ENCODE measurements at regions of chr1 and their contacts with region 1.

Region 1: GRCh38 chr1:182707122-182707521 is 22.7 kb upstream of the RGS8 start:
- DNase-seq: no peak
- H3K4me3 Mint-ChIP-seq: no peak overlapping the region
- H3K27ac Mint-ChIP-seq: no peak overlapping the region
- H3K4me1 Mint-ChIP-seq: peaks cover 28% of the 10 kb centered on the region
- H3K27me3 Mint-ChIP-seq: peaks cover 2% of the 10 kb centered on the region

Region 2: DNA sequence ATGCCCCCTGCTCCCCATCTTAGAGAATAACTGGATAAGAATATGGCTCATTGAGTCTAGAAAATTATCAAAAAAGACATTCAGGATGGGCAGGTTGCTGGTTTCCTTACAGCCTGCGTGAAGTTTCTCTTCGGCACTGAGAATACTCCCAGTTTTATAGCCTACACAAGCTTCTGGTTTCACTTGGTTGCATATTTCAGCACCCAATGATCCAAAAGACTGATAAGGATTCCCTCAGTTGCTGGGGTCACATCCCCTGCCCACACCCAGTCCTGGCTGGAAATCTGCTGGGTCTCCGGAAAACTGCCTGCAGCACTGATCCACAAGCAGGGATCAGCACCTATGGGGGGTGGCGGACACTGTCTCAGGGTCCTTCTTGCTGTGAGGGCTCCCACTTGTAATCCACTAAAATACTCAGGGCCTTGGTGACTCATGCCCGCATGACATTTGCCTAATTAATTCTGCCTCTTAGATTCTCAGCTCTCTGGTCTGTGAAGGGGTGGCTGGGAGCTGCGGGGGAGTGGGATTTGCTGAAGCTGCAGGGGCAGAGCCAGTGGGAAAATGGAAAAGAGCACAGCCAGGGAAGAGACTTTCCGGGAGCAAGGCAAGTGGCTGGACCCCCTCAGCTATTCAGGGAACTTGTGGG is 788.1 kb before region 1 on chr1:
- intact Hi-C with region 1: no loop called
- DNase-seq: no peak
- H3K4me3 Mint-ChIP-seq: no peak overlapping the region
- H3K27ac Mint-ChIP-seq: no peak overlapping the region
- H3K4me1 Mint-ChIP-seq: no peaks in the 10 kb centered on the region
- H3K27me3 Mint-ChIP-seq: no peaks in the 10 kb centered on the region

Region 3: DNA sequence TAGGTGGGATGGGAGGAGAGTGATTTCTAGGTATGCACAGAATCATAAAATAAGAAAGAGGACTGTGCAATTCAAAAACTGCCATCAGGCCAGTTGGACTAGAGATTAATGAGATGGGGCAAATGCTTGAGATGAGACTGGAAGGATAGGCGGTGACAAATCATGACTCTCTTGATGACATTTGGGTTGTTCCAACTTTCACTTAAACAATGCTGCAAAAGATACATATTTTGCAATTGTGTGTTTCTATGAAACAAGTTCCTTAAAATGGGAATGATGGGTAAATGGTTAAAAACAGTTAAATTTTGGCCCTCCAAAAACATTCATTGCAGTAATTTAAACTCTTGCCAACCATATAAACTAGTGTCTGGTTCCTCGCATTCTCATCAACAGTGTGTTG is 173.2 kb before region 1 on chr1:
- intact Hi-C with region 1: no loop called
- DNase-seq: no peak
- H3K4me3 Mint-ChIP-seq: no peak overlapping the region
- H3K27ac Mint-ChIP-seq: no peak overlapping the region
- H3K4me1 Mint-ChIP-seq: no peaks in the 10 kb centered on the region
- H3K27me3 Mint-ChIP-seq: peaks cover 4% of the 10 kb centered on the region

Region 4: GRCh38 chr1:182629499-182630096 is 77.5 kb before region 1 on chr1:
- intact Hi-C with region 1: loop called (anchors 1 kb)
- DNase-seq: peak; percentile 30
- H3K4me3 Mint-ChIP-seq: peak overlapping the region; percentile 46
- H3K27ac Mint-ChIP-seq: peak overlapping the region; percentile 85
- H3K4me1 Mint-ChIP-seq: peaks cover 88% of the 10 kb centered on the region
- H3K27me3 Mint-ChIP-seq: peaks cover 9% of the 10 kb centered on the region

Measured in activated T-helper 1 cell treated with anti-CD3 and anti-CD28 coated beads, Interleukin-12 subunit alpha, Interleukin-12 subunit beta, Interleukin-2, Interleukin-4 antibody, amounts not matched to agents 30 ng/mL and 10 ng/mL and 1 ng/mL, durations not matched to agents 14 hours and 24 hours and 36 hours (primary cell).